ENCODE measurements at regions of chr17 and their contacts with region 1.

Region 1: GRCh38 chr17:68759343-68760132 is 158.4 kb upstream of the FAM20A start:
- DNase-seq: peak; percentile 88 to 96 (median 92)
- ATAC-seq: peak; percentile 98
- H3K4me3 ChIP-seq: peak overlapping the region; percentile 39
- H3K27ac ChIP-seq: peak overlapping the region; percentile 6
- H3K4me1 ChIP-seq: peaks cover 2% of the 10 kb centered on the region
- H3K27me3 ChIP-seq: no peaks in the 10 kb centered on the region

Region 2: GRCh38 chr17:68172461-68172954 is 587.0 kb before region 1 on chr17:
- intact Hi-C with region 1: loop called in 1 of 4 experiments (anchors 10 kb)
- DNase-seq: peak; percentile 63 to 87 (median 83)
- ATAC-seq: peak; percentile 65 to 70
- H3K4me3 ChIP-seq: no peak overlapping the region
- H3K27ac ChIP-seq: no peak overlapping the region
- H3K4me1 ChIP-seq: no peaks in the 10 kb centered on the region
- H3K27me3 ChIP-seq: no peaks in the 10 kb centered on the region

Region 3: DNA sequence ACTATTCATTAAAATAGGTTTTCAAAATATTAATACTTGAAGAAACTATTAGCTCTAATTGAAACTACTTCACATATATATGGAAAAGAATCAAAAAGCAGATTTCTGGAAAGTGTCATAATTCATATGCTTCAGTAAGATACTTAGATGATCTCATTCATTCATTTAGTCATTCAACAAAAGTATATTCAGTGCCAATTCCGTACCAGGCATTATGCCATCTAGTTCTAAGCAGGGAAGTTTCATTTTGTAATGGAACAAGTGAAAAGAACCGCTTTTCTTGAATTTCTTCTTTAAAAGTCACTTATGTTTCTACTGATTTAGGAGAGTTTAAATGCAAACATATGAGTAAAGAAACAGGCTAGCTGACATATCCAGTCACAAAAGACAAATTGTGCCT is 40.1 kb before region 1 on chr17:
- intact Hi-C with region 1: no loop called
- DNase-seq: no peak
- ATAC-seq: no peak
- H3K4me3 ChIP-seq: no peak overlapping the region
- H3K27ac ChIP-seq: no peak overlapping the region
- H3K4me1 ChIP-seq: no peaks in the 10 kb centered on the region
- H3K27me3 ChIP-seq: no peaks in the 10 kb centered on the region

Region 4: GRCh38 chr17:68821860-68822696 is 62.5 kb after region 1 on chr17:
- intact Hi-C with region 1: no loop called
- DNase-seq: no peak
- ATAC-seq: peak; percentile 48 to 72
- H3K4me3 ChIP-seq: no peak overlapping the region
- H3K27ac ChIP-seq: no peak overlapping the region
- H3K4me1 ChIP-seq: peaks cover 4% of the 10 kb centered on the region
- H3K27me3 ChIP-seq: no peaks in the 10 kb centered on the region